ENCODE measurements at regions of chr19 and their contacts with region 1.

Region 1: GRCh38 chr19:33771384-33772101 is 25.1 kb upstream of the KCTD15 start:
- DNase-seq: peak; percentile 80 to 94
- ATAC-seq: peak; percentile 54 to 91
- H3K4me3 ChIP-seq: no peak overlapping the region
- H3K27ac ChIP-seq: no peak overlapping the region
- H3K4me1 ChIP-seq: no peaks in the 10 kb centered on the region
- CTCF ChIP-seq: peak; percentile 98
- EP300 ChIP-seq: no peak
- POLR2A ChIP-seq: no peak
- RAD21 ChIP-seq: peak; percentile 99 to 100

Region 2: GRCh38 chr19:33241530-33242101 is 529.9 kb before region 1 on chr19:
- CTCF ChIA-PET with region 1: interaction called, 48 read pairs
- POLR2A ChIA-PET with region 1: no interaction called
- DNase-seq: peak in 1 of 2 experiments; percentile 45
- ATAC-seq: peak; percentile 22 to 73; a peak in 4 of 6 replicates
- H3K4me3 ChIP-seq: no peak overlapping the region
- H3K27ac ChIP-seq: peak overlapping the region in 1 of 2 experiments; percentile 46; a peak in 3 of 6 replicates
- H3K4me1 ChIP-seq: 0 out of 3 replicates have a peak, but pooled peaks cover 3% of the 10 kb centered on the region
- CTCF ChIP-seq: peak; percentile 98
- EP300 ChIP-seq: no peak
- POLR2A ChIP-seq: no peak
- RAD21 ChIP-seq: peak; percentile 97 to 100

Region 3: DNA sequence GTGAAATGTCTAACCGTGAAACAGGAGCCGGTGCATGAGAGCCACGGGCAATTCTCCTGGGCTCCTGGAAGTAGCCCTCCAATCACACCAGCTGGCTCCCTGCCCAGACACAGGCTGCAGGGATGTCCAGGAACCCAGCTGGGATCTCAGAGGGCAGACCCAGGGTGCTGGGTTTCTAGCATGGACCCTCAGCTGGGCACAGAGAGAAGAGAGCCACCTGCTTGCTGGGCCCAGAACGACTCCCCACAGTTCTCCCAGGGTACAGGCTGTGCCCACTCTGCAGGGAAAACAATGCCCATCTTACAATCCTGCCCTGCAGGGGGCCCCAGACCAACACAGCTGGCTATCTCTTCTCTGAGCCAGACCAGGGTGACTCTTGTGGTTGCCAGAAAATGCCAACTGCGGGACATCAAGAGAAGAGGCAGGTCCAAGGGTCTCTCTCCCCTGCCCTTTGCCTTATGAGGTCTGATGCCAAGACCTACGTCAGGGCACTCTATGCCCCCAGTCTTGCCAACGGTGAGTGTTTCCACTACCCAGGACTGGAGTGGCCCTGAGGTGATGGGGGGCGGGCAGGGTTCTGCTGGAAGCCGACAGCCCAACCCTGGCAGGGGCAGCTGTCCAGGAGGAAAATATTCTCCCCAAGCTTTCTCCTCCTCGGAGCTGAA is 333.4 kb before region 1 on chr19:
- CTCF ChIA-PET with region 1: interaction called, 572 read pairs
- POLR2A ChIA-PET with region 1: no interaction called
- DNase-seq: peak in 1 of 2 experiments; percentile 48
- ATAC-seq: peak; percentile 27 to 72; a peak in 4 of 6 replicates
- H3K4me3 ChIP-seq: no peak overlapping the region
- H3K27ac ChIP-seq: no peak overlapping the region
- H3K4me1 ChIP-seq: no peaks in the 10 kb centered on the region
- CTCF ChIP-seq: no peak
- EP300 ChIP-seq: no peak
- POLR2A ChIP-seq: no peak
- RAD21 ChIP-seq: peak in 1 of 2 experiments; percentile 37; a peak in 3 of 5 replicates

Region 4: DNA sequence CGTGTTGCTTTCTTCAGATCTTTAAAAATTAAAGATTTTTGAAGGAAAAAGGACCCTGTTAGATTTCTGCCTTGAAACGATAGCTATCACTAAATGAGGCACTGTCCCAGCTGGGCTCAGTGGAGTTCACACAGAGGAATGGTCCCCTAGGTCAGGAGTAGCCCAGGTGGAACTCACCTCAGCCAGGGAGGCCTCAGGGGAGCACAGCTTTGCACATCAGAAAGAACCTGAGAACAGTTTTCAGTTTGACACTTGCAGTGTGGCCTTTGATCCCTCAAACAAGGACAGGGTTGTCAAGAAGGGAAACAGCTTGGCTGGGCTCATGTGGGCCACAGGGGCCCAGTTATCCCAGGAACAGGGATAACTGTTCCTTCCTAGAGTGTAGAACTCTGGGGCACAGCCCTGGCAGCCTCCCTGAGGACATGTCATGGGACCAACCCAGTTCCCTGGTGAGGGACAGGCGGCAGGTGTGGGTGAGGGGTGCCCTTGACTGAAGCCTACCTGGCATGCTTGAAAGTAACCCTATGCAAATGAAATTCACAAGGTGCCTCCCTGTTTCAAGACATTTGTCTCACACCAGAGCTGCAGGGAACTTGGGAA is 90.4 kb before region 1 on chr19:
- CTCF ChIA-PET with region 1: no interaction called
- POLR2A ChIA-PET with region 1: no interaction called
- DNase-seq: no peak
- ATAC-seq: no peak
- H3K4me3 ChIP-seq: no peak overlapping the region
- H3K27ac ChIP-seq: no peak overlapping the region
- H3K4me1 ChIP-seq: no peaks in the 10 kb centered on the region
- CTCF ChIP-seq: no peak
- EP300 ChIP-seq: no peak
- POLR2A ChIP-seq: no peak
- RAD21 ChIP-seq: no peak

Region 5: GRCh38 chr19:33740811-33741396 is 30.6 kb before region 1 on chr19:
- CTCF ChIA-PET with region 1: interaction called, 19 read pairs
- POLR2A ChIA-PET with region 1: no interaction called
- DNase-seq: peak; percentile 45 to 54
- ATAC-seq: peak; percentile 48 to 71; a peak in 4 of 6 replicates
- H3K4me3 ChIP-seq: no peak overlapping the region
- H3K27ac ChIP-seq: no peak overlapping the region
- H3K4me1 ChIP-seq: no peaks in the 10 kb centered on the region
- CTCF ChIP-seq: no peak
- EP300 ChIP-seq: no peak
- POLR2A ChIP-seq: no peak
- RAD21 ChIP-seq: no peak

Region 6: DNA sequence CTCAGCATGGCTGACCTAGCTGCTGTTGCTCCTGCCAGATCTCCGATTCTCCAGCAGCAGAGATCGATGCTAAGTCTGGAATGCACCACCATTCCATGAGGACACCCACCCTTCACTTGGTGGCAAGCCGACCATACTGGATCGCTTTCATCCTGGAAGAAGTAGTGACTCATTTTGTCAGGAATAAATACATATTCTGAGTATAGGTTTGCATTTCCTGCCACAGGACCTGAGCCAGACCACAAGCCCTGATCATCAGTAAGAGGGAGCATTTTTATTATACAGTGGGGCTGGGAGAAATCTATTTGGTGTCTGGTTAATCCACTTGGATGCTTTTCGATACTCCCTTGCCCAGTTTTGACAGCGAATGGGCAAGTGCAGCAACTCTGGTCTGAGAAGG is 14.3 kb after region 1 on chr19:
- CTCF ChIA-PET with region 1: interaction called, 313 read pairs
- POLR2A ChIA-PET with region 1: no interaction called
- DNase-seq: no peak
- ATAC-seq: no peak
- H3K4me3 ChIP-seq: no peak overlapping the region
- H3K27ac ChIP-seq: no peak overlapping the region
- H3K4me1 ChIP-seq: peaks cover 19% of the 10 kb centered on the region
- CTCF ChIP-seq: no peak
- EP300 ChIP-seq: no peak
- POLR2A ChIP-seq: no peak
- RAD21 ChIP-seq: no peak

Region 7: DNA sequence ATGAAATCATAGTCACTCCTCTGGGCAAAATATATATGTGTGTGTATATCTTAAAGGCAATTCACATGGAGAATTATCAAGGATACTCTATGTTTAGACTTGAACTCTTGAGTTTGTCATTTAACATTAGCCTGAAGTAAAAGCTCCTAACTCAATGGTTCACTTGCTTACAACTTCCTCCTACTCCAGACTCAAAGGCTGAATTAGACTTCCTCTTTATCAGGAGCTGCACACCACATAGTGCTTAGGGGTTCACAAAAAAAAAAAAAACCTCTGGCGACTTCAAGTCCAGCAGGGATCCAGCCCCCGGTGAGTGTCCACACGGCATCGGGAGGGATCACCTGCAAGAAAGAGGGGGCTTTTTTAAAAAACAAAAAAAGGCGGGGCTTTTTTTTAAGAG is 332.6 kb after region 1 on chr19:
- CTCF ChIA-PET with region 1: interaction called, 176 read pairs
- POLR2A ChIA-PET with region 1: no interaction called
- DNase-seq: no peak
- ATAC-seq: no peak
- H3K4me3 ChIP-seq: no peak overlapping the region
- H3K27ac ChIP-seq: no peak overlapping the region
- H3K4me1 ChIP-seq: no peaks in the 10 kb centered on the region
- CTCF ChIP-seq: no peak
- EP300 ChIP-seq: no peak
- POLR2A ChIP-seq: no peak
- RAD21 ChIP-seq: no peak

Measured in A549 (cell line).